Uterus (tissue), 4 donors: ENCODE measurements at regions of chr7 and their contacts with region 1.

Region 1: GRCh38 chr7:28389504-28390395 is 22.6 kb upstream of the CREB5 start:
- DNase-seq: no peak
- H3K4me3 ChIP-seq: peak overlapping the region; percentile 21 to 25
- H3K27ac ChIP-seq: peak overlapping the region; percentile 42 to 51
- H3K4me1 ChIP-seq: no peaks in the 10 kb centered on the region
- H3K27me3 ChIP-seq: no peaks in the 10 kb centered on the region
- CTCF ChIP-seq: peak; percentile 55 to 87 (median 76)
- POLR2A ChIP-seq: no peak

Region 2: DNA sequence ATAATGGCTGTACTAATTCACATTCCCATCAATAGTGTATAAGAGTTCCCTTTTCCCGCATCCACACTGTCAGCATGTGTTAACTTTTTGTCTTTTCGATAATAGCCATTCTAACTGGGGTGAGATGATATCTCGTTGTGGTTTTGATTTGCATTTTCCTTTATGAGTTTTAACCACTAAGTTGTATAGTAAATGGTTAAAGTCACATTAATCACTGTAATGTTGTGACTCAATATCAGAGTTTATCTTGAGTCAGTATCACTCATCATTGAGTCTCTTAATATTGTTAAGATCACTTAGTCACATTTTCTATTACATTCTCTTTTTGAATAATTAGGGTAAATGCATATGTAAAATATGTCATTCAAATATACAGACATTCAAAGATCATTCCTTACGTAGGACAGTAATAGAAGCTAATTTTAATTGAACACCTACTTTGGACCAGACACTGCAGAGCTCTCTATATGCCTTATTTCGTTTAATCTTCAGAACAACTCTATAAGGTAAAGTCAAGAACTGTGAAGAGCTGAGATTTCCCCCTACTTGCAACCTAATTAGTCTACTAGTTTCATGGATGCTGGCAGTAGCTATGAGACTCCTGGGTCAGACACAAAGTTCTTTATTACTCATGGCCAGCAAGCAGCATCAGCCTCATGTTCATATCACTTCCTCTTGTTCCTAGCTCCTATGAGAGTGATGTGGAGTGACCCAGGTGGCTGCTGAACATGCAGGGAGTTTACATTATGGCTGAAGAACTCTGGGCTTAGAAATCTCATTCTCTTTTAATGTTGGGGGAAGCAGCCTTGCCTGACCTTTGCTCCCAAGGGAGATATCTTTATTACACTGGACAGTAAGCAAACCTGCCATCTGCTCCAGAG is 53.0 kb after region 1 on chr7:
- intact Hi-C with region 1: no loop called
- DNase-seq: no peak
- H3K4me3 ChIP-seq: no peak overlapping the region
- H3K27ac ChIP-seq: no peak overlapping the region
- H3K4me1 ChIP-seq: no peaks in the 10 kb centered on the region
- H3K27me3 ChIP-seq: no peaks in the 10 kb centered on the region
- CTCF ChIP-seq: no peak
- POLR2A ChIP-seq: no peak

Region 3: DNA sequence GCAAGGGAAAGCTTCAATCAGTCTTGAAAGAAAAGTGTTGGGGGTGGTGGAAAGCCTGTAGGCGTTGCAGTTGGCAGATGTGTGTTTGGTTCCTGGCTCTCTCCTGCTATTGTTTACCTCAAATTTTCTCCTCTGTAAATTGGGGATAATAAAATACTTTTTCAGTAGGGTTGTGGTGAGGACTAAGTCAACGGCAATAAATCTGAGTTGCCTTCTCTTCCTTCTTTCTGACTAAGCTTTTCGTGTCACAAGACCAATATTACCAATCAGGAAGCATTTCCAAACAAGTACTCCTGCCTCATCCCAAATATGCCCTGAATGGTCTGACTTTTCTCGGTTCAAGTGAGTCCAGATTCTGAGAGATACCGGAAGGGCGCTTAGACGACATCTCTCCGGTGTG is 76.6 kb after region 1 on chr7:
- intact Hi-C with region 1: no loop called
- DNase-seq: no peak
- H3K4me3 ChIP-seq: no peak overlapping the region
- H3K27ac ChIP-seq: no peak overlapping the region
- H3K4me1 ChIP-seq: no peaks in the 10 kb centered on the region
- H3K27me3 ChIP-seq: no peaks in the 10 kb centered on the region
- CTCF ChIP-seq: no peak
- POLR2A ChIP-seq: no peak

Region 4: GRCh38 chr7:28853834-28854749 is 464.3 kb after region 1 on chr7:
- intact Hi-C with region 1: loop called (anchors 5 kb)
- DNase-seq: peak; percentile 63 to 84
- H3K4me3 ChIP-seq: peak overlapping the region; percentile 30 to 39
- H3K27ac ChIP-seq: no peak overlapping the region
- H3K4me1 ChIP-seq: peaks cover 0 to 4% of the 10 kb centered on the region in 2 donors
- H3K27me3 ChIP-seq: peaks cover 0 to 4% of the 10 kb centered on the region in 2 donors
- CTCF ChIP-seq: peak; percentile 85 to 93 (median 88)
- POLR2A ChIP-seq: peak in 1 of 2 donors; percentile 23